Caco-2 (cell line): ENCODE measurements at regions of chr11 and their contacts with region 1.

Region 1: DNA sequence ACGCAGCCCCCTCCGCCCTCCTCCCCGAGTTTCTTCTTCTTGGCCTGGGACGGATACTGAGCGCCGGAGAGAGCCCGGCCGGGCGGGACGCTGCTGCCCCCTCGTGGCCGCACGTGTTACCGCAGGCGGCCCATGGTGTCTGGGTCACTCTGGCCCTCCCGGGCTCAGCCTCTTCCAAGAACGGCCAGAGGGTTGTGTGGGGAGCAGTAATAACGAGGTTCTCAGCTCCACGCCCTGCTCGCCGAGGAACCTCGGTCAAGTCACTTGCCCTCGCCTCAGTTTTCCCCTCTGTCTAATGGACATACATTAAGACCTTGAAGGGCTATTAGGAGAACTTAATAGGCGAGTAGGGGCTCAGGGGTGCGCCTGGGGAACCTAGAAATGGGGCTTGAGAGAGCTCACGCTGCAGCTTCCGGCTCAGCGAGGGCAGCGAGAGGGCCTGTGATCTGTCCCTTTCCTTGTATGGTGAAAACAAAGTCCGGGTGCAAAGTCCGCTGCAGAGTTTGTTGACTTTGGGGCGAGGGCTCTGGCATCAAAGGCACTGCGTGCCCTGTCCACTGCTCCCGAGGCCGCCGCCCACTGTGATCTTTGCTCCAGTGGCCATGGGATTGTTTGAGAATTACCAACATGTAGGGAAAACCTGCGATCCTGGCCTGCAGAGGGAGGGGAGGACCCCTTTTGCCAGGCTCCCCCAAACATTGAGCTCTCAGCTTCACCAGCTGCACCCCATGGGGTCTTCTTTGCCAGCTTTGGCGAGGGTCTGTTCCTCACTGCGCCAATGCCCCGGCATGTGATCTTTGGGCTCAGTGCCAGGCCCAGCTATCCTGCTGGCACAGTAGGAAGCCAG is 14.4 kb upstream of the LRP5 start:
- DNase-seq: peak; percentile 96 to 98
- H3K4me3 ChIP-seq: peak overlapping the region; percentile 26
- H3K4me3 Mint-ChIP-seq: peak overlapping the region; percentile 73
- H3K27ac Mint-ChIP-seq: peak overlapping the region; percentile 89
- H3K4me1 ChIP-seq: peaks cover 37% of the 10 kb centered on the region
- H3K4me1 Mint-ChIP-seq: peaks cover 27% of the 10 kb centered on the region
- H3K27me3 ChIP-seq: no peaks in the 10 kb centered on the region
- H3K27me3 Mint-ChIP-seq: no peaks in the 10 kb centered on the region
- CTCF ChIP-seq: peak; percentile 100

Region 2: DNA sequence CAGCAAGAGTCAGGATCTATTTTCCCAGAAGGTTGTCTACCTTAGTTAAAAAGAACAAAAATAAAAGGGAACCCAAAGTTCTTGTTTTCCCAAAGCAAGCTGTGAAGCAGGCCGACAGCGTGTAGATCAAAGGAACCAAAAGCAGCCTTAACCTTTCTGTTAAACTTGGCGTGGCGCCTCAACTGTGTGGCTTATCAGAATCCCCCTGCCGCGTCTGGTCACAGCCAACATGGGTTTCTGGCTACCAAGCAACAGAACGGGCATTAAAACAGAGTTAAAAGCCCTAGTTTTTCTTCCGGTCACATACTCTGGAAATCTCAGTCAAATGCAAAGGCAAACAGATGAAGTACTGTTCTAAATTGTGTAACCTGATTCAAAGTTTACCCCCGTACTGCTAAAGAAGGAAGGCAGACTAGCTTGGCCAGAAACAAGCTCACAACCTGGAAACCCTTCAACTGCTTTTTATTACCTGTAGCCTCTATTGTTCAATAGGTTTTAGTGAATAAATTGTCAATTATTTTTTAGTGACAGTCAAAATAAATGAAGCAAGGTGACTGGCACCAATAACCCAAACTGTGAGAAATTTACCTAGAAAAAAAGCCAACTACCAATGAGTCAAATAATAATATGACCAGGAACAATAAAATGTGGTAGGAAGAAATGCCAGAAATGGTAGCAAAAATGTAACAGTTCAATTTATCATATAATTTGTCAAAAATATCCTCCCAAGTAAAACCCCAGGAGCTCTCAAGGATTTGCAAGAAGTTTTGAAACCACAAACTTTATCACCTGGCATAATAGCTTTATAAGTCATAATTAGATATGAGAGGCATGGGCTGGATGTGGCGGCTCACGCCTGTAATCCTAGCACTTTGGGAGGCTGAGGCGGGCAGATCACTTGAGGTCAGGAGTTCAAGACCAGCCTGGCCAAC is 198.3 kb before region 1 on chr11:
- CTCF ChIA-PET with region 1: interaction called, 10 read pairs
- POLR2A ChIA-PET with region 1: no interaction called
- intact Hi-C with region 1: no loop called
- DNase-seq: peak; percentile 65 to 72
- H3K4me3 ChIP-seq: no peak overlapping the region
- H3K4me3 Mint-ChIP-seq: peak overlapping the region; percentile 57
- H3K27ac Mint-ChIP-seq: peak overlapping the region; percentile 61
- H3K4me1 ChIP-seq: peaks cover 20% of the 10 kb centered on the region
- H3K4me1 Mint-ChIP-seq: peaks cover 48% of the 10 kb centered on the region
- H3K27me3 ChIP-seq: no peaks in the 10 kb centered on the region
- H3K27me3 Mint-ChIP-seq: no peaks in the 10 kb centered on the region
- CTCF ChIP-seq: no peak

Region 3: DNA sequence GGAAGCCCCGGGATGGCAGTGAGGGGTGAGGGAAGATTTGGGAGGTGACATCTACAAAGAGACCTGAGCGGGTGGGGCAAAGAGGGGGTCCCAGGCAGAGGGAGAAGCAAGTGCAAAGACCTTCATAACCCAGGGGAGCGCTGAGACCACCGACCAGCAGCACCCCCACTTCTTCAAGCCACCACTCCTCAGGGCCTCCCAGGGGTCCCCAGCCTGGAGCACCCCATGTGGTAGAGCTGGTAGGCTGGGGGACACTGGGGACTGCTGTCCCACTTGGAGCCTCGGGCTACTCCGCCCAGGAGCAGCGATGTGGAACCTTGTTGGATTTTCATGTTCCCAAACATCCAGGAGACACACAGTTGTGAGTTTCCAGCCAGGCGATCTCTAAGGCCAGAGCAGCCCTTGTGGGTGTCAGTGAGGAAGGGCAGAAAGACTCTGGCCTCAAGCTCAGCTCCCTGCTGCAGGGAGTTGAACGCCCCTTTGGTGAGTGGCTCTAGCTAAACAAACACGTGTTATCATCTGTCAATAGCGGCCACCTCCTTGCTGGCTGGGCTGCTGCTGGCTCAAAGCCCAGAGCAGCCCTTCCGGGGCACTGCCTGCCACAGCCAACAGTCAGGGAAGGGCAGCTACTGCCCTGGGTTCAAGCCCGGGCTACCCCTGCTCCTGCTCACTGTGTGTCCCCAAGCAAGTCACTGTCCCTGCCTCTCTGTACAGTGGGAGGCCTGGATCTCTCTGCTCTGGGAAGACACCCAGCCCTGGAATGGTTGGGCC is 151.1 kb before region 1 on chr11:
- CTCF ChIA-PET with region 1: no interaction called
- POLR2A ChIA-PET with region 1: no interaction called
- intact Hi-C with region 1: no loop called
- DNase-seq: peak; percentile 88 to 94
- H3K4me3 ChIP-seq: no peak overlapping the region
- H3K4me3 Mint-ChIP-seq: no peak overlapping the region
- H3K27ac Mint-ChIP-seq: peak overlapping the region; percentile 0
- H3K4me1 ChIP-seq: peaks cover 41% of the 10 kb centered on the region
- H3K4me1 Mint-ChIP-seq: peaks cover 26% of the 10 kb centered on the region
- H3K27me3 ChIP-seq: no peaks in the 10 kb centered on the region
- H3K27me3 Mint-ChIP-seq: no peaks in the 10 kb centered on the region
- CTCF ChIP-seq: peak in 1 of 2 experiments; percentile 6

Region 4: DNA sequence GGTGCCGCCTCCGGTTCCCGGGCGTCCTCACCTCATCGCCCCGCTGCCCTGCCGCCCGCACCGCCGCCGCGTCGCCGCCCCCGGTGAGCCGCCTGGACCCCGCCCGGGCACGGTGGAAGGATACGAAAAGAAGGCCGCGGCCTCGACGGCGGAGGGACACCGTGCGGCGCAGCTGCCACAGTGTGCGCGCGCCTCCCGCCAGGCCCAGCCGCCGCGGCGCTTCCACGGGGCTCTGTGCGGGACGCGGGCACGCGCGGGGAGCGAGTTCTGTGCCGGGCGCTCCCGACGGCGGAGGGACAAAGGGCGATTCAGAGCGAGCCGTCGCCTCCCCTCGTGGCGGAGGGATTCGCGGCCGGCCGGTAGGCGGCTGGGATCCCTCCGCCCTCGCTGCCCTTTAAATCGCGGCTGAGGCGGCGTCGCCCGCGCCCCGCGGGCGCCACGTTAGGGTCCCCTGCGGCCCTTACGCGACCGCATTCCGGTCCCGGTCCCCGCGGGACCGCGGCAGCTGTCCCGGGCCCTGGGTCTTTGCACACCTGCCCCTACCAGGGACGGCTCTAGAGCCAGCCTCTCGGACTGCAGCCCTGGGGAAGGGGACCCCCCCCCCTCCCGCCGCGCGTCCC is 84.4 kb before region 1 on chr11:
- CTCF ChIA-PET with region 1: interaction called, 32 read pairs
- POLR2A ChIA-PET with region 1: interaction called, 4 read pairs
- intact Hi-C with region 1: loop called (anchors 2 kb)
- DNase-seq: peak; percentile 95 to 97
- H3K4me3 ChIP-seq: peak overlapping the region; percentile 99
- H3K4me3 Mint-ChIP-seq: peak overlapping the region; percentile 86
- H3K27ac Mint-ChIP-seq: peak overlapping the region; percentile 85
- H3K4me1 ChIP-seq: peaks cover 21% of the 10 kb centered on the region
- H3K4me1 Mint-ChIP-seq: peaks cover 32% of the 10 kb centered on the region
- H3K27me3 ChIP-seq: no peaks in the 10 kb centered on the region
- H3K27me3 Mint-ChIP-seq: no peaks in the 10 kb centered on the region
- CTCF ChIP-seq: no peak

Region 5: DNA sequence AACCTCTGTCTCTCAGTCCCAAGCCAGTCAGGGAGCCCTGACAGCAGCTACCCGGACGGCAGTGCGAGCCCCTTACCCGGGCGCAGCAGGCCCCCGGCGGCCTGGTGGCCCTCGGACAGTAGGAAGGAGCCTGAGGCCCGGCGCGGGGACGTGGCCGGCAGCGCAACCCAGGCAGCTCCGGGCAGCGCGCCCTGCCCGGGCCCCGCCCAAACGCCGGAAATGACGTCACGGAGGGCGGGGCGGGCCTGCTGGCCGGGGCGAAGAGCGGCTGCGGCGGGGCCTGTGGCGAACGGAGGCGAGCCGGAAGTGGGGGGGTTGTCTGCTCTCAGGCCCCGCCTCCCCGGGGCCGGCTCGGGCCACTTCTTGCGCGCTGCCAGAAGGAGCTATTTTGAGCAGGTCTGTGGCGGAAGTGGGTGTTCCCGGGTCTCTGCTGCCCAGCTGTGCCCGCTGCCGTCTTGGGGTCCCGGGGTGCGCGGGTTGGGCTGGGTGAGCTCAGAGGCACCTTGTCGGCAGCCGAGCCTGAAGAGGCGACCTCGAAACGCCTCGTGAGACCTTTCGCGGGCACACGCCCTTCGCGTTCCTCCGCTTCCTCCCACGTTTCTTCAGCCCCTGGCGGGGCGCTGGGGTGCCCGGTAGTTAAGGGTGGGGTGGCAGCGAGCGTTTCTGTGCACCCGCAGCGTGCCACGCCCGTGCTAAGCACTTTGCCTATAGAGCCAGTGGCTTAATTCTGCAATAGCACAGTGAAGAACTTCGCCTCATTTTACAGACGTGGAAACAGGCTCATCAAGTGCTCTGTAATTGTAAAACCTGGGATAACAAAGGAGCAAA is 26.0 kb before region 1 on chr11 and contains the start of gene C11orf24:
- CTCF ChIA-PET with region 1: interaction called, 55 read pairs
- POLR2A ChIA-PET with region 1: interaction called, 43 read pairs
- intact Hi-C with region 1: loop called (anchors 2 kb)
- DNase-seq: peak; percentile 97 to 100
- H3K4me3 ChIP-seq: peak within 1 kb of the TSS; percentile 93
- H3K4me3 Mint-ChIP-seq: peak within 1 kb of the TSS; percentile 100
- H3K27ac Mint-ChIP-seq: peak within 1 kb of the TSS; percentile 98
- H3K4me1 ChIP-seq: peaks cover 33% of the 10 kb centered on the region
- H3K4me1 Mint-ChIP-seq: peaks cover 28% of the 10 kb centered on the region
- H3K27me3 ChIP-seq: no peaks in the 10 kb centered on the region
- H3K27me3 Mint-ChIP-seq: no peaks in the 10 kb centered on the region
- CTCF ChIP-seq: peak in 1 of 2 experiments; percentile 10
- total RNA-seq, gene C11orf24: 79.8 and 83.2 TPM in 2 replicates

Region 6: DNA sequence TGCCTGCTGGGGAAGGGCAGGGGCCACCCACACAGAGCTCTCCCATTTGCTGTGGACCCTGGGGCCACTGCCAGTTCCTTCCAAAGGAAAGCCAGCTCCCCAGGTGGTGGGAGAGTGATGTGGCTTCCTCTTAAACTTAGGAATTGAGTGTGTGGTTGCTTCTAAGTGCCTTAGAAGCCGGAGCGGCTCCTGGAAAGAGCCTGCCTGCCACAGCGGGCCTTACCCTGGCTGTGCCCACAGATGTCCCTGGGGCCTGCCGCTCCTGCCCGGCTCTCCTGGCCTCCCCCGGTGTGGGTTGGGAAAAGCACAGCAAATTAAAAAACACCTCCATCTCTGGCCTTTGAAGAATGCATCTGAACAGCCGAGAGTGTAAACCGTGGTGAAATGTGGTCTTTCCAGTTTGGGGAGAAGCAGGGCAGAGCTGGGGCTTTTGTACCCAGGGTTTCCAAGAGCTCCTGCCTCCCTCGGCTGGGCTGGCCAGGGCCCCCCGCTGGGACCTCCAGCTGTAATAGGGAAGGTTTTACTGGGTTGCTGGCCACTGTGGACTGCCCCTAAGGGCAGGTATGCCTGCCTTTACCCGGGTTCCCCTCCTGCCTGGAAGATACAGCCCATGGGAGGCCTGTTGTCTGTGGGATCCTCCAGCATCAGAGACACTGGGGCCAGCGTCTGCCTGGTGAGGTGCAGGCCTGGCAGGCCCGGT is 44.6 kb after region 1 on chr11:
- CTCF ChIA-PET with region 1: interaction called, 35 read pairs
- POLR2A ChIA-PET with region 1: interaction called, 9 read pairs
- intact Hi-C with region 1: loop called (anchors 2 kb)
- DNase-seq: peak; percentile 95
- H3K4me3 ChIP-seq: no peak overlapping the region
- H3K4me3 Mint-ChIP-seq: peak overlapping the region; percentile 43
- H3K27ac Mint-ChIP-seq: peak overlapping the region; percentile 90
- H3K4me1 ChIP-seq: peaks cover 66% of the 10 kb centered on the region
- H3K4me1 Mint-ChIP-seq: peaks cover 67% of the 10 kb centered on the region
- H3K27me3 ChIP-seq: no peaks in the 10 kb centered on the region
- H3K27me3 Mint-ChIP-seq: no peaks in the 10 kb centered on the region
- CTCF ChIP-seq: no peak